ENCODE measurements at regions of chr10 and their contacts with region 1.

Region 1: GRCh38 chr10:12703813-12704212 is 297.7 kb downstream of the CCDC3 start:
- DNase-seq: peak; percentile 81
- ATAC-seq: peak; percentile 43
- H3K4me3 ChIP-seq: peak overlapping the region; percentile 54
- H3K27ac ChIP-seq: peak overlapping the region; percentile 100
- H3K4me1 ChIP-seq: peaks cover 69% of the 10 kb centered on the region
- H3K27me3 ChIP-seq: no peaks in the 10 kb centered on the region
- CTCF ChIP-seq: no peak

Region 2: GRCh38 chr10:12121673-12122072 is 582.1 kb before region 1 on chr10:
- CTCF ChIA-PET with region 1: no interaction called
- POLR2A ChIA-PET with region 1: no interaction called
- intact Hi-C with region 1: no loop called
- DNase-seq: no peak
- ATAC-seq: no peak
- H3K4me3 ChIP-seq: no peak overlapping the region
- H3K27ac ChIP-seq: no peak overlapping the region
- H3K4me1 ChIP-seq: no peaks in the 10 kb centered on the region
- H3K27me3 ChIP-seq: no peaks in the 10 kb centered on the region
- CTCF ChIP-seq: no peak

Region 3: DNA sequence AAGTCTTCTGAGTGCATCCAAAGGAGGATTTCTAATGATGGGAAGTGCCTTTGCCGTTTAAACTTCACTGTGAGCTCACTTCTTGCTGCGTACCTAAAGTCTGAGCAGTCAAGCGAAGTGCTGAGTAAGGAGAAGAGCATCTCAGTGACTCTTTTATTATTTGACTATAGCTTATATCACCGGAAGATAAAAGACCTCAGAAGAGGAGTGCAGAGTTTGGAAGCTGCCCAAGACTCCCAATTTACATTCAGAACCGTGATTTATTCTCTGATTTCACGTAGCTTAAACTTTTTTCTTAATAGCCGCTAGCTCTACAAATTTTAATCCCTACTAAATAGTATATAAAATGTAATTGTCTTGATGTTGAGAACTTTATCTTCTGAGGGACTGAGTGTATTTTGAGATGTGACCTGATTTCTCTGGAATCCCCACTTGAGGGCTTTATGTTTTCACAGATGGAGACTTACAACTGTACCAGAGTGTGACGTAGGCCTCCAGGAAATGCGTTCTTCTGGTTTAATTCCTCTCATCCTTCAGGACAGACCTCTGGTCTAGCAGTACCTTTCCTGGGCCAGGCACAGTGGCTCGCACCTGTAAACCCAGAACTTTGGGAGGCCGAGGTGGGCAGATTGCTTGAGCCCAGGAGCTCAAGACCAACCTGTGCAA is 303.4 kb before region 1 on chr10:
- CTCF ChIA-PET with region 1: interaction called, 4 read pairs
- POLR2A ChIA-PET with region 1: interaction called, 11 read pairs
- intact Hi-C with region 1: loop called (anchors 5 kb)
- DNase-seq: peak; percentile 79
- ATAC-seq: peak; percentile 84
- H3K4me3 ChIP-seq: peak overlapping the region; percentile 42; the same call in 1 of the 2 replicates
- H3K27ac ChIP-seq: peak overlapping the region; percentile 92
- H3K4me1 ChIP-seq: peaks cover 29% of the 10 kb centered on the region
- H3K27me3 ChIP-seq: no peaks in the 10 kb centered on the region
- CTCF ChIP-seq: no peak

Region 4: DNA sequence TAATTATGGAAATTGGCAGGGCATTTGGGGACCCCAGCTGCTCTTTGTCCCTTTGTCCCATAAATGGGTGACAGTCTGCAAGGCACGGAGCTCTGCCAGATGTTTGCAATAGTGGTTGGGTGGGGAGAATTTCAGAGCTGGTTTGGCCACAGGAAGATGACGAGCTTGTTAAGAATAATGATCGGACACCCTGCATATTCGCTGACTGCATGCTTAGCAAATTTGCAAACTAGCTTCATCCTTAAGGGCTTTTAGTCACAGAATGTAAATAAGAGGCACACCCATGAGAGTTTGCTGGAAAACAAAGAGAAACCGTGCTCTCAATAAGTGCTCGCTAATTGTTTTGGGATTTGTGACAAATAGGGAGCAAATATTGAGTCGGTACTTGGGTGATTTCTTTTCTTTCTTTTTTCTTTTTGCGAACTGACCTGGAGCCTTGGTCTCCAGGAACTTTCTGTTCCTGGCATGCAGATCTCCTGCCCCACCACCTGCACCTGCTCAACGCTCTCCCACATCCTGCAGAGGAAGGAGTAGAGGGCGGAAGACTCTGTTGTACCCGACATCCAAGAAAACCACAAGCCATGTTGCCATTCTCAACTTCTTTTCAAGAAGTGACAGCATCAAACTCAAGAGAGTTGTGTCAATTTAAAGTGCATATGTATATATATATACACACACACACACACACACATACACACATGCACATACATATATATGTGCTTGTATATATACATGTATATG is 115.5 kb before region 1 on chr10:
- CTCF ChIA-PET with region 1: no interaction called
- POLR2A ChIA-PET with region 1: no interaction called
- intact Hi-C with region 1: loop called (anchors 2 kb)
- DNase-seq: peak; percentile 63
- ATAC-seq: peak; percentile 86
- H3K4me3 ChIP-seq: peak overlapping the region; percentile 61
- H3K27ac ChIP-seq: peak overlapping the region; percentile 67
- H3K4me1 ChIP-seq: peaks cover 5% of the 10 kb centered on the region; the same call in 1 of the 2 replicates
- H3K27me3 ChIP-seq: no peaks in the 10 kb centered on the region
- CTCF ChIP-seq: no peak

Region 5: DNA sequence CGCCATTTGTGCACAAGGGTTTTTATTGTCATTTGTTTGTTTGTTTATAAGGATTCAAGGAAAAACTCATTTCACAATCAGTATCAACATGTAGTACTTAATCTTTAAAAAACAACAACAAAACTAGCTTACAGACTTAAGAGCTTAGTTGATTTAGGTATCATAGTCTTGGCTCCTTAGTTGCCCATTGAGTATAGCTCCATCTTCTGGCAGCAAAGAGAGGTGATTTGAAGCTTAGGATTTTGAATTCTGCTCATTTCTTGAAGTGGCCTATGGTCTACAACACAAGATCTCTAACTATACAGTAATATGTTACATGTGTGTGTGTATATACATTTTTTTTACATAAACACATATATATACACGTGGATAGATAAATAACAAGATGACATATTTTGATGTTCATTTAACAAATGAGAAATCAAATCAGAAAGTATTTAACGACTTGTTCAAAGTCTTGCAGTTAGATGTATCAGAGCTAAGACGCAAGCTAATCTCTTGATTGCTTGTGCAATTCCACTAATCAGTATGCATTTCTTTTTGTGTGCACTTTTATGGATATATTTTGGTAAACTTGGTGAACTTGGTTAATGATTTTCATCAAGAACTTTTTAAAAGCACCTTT is 47.2 kb before region 1 on chr10:
- CTCF ChIA-PET with region 1: interaction called, 6 read pairs
- POLR2A ChIA-PET with region 1: interaction called, 22 read pairs
- intact Hi-C with region 1: no loop called
- DNase-seq: peak; percentile 60
- ATAC-seq: peak; percentile 43
- H3K4me3 ChIP-seq: no peak overlapping the region
- H3K27ac ChIP-seq: no peak overlapping the region
- H3K4me1 ChIP-seq: no peaks in the 10 kb centered on the region
- H3K27me3 ChIP-seq: no peaks in the 10 kb centered on the region
- CTCF ChIP-seq: peak; percentile 76

Region 6: DNA sequence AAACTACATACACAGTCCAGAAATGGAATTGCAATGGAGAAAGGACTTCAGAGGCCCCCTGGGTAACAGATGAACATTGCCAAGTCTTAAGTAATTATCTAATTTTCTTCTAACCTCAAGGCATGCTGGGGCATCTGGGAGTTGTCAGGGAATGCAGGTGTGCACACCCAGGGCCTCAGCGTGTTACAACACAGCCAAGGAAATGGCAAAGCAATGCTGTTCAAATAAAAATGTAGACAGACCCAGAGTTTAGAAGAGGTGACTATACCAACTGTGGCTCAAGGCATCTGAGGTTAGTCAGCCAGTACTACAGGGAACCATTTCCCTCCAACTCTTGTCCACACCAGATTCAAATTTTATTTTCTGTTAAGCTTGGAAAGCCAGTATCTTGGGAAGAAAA is 224.1 kb after region 1 on chr10:
- CTCF ChIA-PET with region 1: no interaction called
- POLR2A ChIA-PET with region 1: no interaction called
- intact Hi-C with region 1: no loop called
- DNase-seq: no peak
- ATAC-seq: no peak
- H3K4me3 ChIP-seq: no peak overlapping the region
- H3K27ac ChIP-seq: no peak overlapping the region
- H3K4me1 ChIP-seq: no peaks in the 10 kb centered on the region
- H3K27me3 ChIP-seq: no peaks in the 10 kb centered on the region
- CTCF ChIP-seq: no peak

Measured in PC-3 (cell line).